HAP-1 (cell line): ENCODE measurements at regions of chr9 and their contacts with region 1.

Region 1: GRCh38 chr9:33225319-33226149 is 14.4 kb upstream of the SPINK4 start:
- DNase-seq: peak; percentile 79 to 80
- H3K4me3 ChIP-seq: no peak overlapping the region
- H3K4me1 ChIP-seq: peaks cover 5% of the 10 kb centered on the region
- H3K27me3 ChIP-seq: no peaks in the 10 kb centered on the region

Region 2: DNA sequence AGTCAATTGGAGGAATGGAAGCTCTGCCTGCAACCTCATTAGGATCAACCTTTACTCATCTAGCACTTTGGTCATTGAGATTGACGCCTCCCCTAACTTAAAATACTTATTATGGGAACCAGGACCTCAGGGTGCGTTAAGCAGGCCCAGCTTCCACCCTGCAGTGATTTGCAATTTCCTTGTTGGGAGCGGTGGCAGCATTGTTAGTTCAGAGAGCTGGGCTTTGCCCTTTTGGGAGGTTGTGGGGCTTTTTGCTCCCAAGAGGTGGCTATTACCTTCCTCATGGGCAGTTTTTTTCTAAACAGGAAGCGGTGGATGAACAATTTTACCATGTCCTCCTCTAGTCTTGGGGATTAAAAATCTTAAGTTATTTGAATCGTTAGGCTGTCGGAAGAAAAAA is 381.3 kb before region 1 on chr9:
- in situ Hi-C with region 1: no loop called
- DNase-seq: no peak
- H3K4me3 ChIP-seq: no peak overlapping the region
- H3K4me1 ChIP-seq: no peaks in the 10 kb centered on the region
- H3K27me3 ChIP-seq: peaks cover 6% of the 10 kb centered on the region

Region 3: GRCh38 chr9:33044127-33044673 is 181.3 kb before region 1 on chr9:
- in situ Hi-C with region 1: no loop called
- DNase-seq: no peak
- H3K4me3 ChIP-seq: no peak overlapping the region
- H3K4me1 ChIP-seq: peaks cover 5% of the 10 kb centered on the region
- H3K27me3 ChIP-seq: no peaks in the 10 kb centered on the region

Region 4: DNA sequence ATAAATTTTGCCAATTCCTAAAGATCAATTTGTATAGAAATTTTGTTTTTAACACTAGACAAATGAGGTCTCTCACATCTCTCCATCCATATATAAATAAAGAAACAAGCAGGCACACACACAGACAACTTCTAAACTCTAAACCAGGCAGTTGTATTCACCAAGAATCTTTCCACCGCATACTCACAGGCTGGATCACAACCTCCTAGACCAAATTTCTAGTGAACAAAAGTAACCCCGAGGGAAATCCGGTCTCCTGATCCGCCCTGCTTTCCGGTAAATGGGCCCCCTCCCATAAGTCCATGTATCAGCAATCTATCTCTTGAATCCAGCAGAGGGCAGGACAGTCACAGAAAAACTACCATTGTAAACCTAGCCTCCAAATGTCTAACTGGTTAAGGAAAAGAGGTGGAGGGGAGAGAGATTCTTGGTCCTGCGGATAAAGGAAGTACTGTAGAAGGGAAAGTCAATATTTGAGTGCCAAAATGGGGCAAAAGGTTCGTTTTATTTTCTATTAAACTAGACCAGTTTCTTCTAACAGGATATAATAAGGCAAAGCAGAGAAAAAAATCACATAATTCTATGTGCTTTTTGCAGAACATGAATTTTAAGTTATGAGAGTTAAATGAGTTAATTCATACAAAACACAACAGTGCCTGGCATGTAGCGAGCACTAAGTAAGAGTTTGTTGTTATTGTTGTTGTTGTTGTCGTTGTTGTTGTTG is 144.2 kb before region 1 on chr9:
- in situ Hi-C with region 1: loop called (anchors 5 kb)
- DNase-seq: peak; percentile 78 to 92
- H3K4me3 ChIP-seq: no peak overlapping the region
- H3K4me1 ChIP-seq: no peaks in the 10 kb centered on the region
- H3K27me3 ChIP-seq: no peaks in the 10 kb centered on the region

Region 5: DNA sequence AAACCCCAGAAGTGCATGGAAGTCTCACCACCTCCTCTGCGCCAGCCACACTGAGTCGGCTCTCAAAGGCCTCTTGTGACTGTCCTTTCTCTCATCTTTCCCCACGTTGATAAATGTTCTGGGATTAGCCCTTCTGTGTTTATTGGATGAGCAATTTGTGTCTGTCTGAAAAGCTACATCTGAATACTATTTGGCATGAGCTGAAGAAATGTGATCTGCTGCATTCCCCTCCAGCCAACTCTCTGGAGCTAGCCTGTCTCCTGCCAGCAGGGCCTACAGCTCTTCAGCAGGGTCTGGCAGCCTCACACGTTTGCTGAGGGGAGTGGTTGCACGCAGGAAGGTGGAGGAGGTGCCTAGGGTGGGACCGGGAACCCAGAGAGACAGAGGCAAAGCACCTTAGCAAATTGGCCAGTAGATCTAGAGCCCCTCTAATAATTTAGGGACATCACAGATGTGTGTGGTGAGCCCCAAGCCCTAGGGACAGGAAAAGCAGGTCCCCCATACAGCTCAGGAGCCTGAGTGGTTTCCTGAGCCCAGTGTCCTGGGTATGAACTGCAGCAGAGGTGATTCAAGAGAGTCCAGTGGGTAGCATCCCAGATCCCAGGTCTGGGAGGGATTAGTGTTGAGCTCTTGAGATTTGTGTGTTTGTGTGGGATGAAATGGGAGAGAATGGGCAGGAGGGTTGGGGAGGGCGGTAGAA is 37.9 kb before region 1 on chr9:
- in situ Hi-C with region 1: no loop called
- DNase-seq: no peak
- H3K4me3 ChIP-seq: no peak overlapping the region
- H3K4me1 ChIP-seq: no peaks in the 10 kb centered on the region
- H3K27me3 ChIP-seq: no peaks in the 10 kb centered on the region; the same call in 1 of the 2 replicates